Cardiac septum (tissue), 1 donor: ENCODE measurements at regions of chr7 and their contacts with region 1.

Region 1: DNA sequence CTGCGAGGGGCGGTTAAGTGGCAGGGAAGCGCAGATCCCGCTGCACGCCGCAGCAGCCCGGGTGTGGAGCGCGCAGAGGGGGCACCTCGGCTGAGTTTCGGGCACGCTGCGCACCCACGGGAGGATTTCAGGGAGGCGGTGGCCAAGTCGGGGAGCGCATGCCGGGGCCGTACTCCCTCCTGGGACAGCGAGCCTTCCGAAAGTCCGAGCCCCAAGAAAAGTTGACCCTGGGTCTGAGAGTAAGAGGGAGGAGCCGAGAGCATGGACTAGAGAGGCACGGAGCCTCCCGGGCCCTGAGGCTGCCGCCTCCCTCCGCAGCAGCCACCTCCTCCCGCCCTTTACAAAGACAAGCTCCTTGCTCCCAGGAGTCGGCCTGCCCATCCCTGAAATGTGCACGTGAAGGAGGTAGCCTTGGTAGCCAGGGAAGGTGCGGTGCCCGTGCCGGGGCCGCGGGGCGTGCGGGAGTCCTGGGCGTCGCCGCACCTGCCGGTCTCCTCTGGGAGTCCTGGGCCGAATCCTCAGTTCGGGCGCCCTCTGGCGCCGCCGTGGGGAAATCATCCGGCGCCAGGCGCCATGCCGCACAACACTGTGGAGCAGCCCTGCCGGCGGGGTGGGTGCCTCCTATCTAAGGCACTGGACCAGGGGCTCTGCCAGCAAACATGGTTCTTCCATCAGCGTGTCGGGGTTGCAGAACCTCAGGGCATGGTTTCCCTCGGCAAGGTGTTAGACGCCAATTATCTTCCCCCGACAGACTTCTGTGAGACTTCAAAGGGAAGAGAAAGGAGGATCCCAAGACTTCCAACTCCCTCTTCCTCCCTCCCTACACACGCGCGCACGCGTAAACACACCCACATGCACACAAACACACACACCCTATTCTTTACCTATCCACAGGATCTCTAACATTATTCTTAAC is 104.0 kb downstream of the TRIL start:
- DNase-seq: peak; percentile 93

Region 2: GRCh38 chr7:27689591-27690164 is 1164.4 kb before region 1 on chr7:
- intact Hi-C with region 1: no loop called
- DNase-seq: no peak

Region 3: GRCh38 chr7:28298870-28299518 is 555.1 kb before region 1 on chr7:
- intact Hi-C with region 1: loop called (anchors 5 kb)
- DNase-seq: no peak

Region 4: GRCh38 chr7:28389504-28390395 is 464.3 kb before region 1 on chr7:
- intact Hi-C with region 1: loop called (anchors 5 kb)
- DNase-seq: no peak

Region 5: GRCh38 chr7:28408960-28409715 is 445.0 kb before region 1 on chr7:
- intact Hi-C with region 1: loop called (anchors 5 kb)
- DNase-seq: peak; percentile 96

Region 6: GRCh38 chr7:28685644-28686417 is 168.3 kb before region 1 on chr7:
- intact Hi-C with region 1: loop called (anchors 5 kb)
- DNase-seq: peak; percentile 95